Upper lobe of right lung (tissue), 1 donor: ENCODE measurements at regions of chr2 and their contacts with region 1.

Region 1: DNA sequence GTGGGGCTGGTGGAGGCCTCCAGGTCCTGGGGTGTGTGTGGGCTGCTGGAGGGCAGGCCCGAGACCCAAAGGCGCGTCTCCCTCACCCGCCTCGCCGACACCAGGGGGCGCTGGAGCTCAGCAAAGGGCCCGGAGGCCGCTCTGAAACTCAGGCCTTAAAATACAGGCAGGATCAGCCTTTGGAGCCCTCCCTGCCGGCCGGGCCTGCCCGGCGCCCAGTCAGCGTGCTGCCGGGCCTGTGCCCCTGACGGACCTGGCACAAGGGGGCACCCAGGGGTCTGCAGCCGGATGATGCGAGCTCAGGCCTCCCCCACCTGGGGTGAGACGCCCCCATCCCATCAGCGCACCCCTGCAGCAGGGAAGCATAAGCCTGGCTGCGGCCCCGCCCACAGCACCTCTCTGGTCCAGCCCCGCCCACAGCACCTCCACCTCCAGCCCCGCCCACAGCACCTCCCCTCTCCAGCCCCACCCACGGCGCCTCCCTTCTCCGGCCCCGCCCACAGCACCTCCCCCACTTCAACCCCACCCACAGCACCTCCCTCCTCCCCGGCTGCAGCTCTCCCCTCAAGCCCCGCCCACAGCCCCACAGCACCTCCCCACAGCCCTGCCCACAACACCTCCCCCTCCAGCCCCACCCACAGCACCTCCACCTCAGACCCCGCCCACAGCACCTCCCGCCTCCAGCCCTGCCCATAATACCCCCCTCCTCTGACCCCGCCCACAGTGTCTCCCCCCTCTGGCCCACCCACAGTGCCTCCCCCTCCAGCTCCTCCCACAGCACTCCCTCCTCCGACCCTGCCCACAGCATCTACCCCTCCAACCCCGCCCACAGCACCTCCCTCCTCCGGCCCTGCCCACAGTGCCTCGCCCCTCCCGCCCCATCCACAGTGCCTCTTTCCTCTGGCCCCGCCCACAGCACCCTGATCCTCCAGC is 92.8 kb upstream of the OTOS start:
- DNase-seq: peak; percentile 95
- ATAC-seq: peak; percentile 90
- H3K4me3 ChIP-seq: peak overlapping the region; percentile 35
- H3K27ac ChIP-seq: no peak overlapping the region
- H3K4me1 ChIP-seq: peaks cover 11% of the 10 kb centered on the region
- H3K27me3 ChIP-seq: no peaks in the 10 kb centered on the region
- CTCF ChIP-seq: peak; percentile 82

Region 2: GRCh38 chr2:239944694-239945551 is 288.3 kb before region 1 on chr2:
- intact Hi-C with region 1: no loop called
- DNase-seq: peak; percentile 69
- ATAC-seq: peak; percentile 52
- H3K4me3 ChIP-seq: no peak overlapping the region
- H3K27ac ChIP-seq: no peak overlapping the region
- H3K4me1 ChIP-seq: no peaks in the 10 kb centered on the region
- H3K27me3 ChIP-seq: no peaks in the 10 kb centered on the region
- CTCF ChIP-seq: no peak

Region 3: DNA sequence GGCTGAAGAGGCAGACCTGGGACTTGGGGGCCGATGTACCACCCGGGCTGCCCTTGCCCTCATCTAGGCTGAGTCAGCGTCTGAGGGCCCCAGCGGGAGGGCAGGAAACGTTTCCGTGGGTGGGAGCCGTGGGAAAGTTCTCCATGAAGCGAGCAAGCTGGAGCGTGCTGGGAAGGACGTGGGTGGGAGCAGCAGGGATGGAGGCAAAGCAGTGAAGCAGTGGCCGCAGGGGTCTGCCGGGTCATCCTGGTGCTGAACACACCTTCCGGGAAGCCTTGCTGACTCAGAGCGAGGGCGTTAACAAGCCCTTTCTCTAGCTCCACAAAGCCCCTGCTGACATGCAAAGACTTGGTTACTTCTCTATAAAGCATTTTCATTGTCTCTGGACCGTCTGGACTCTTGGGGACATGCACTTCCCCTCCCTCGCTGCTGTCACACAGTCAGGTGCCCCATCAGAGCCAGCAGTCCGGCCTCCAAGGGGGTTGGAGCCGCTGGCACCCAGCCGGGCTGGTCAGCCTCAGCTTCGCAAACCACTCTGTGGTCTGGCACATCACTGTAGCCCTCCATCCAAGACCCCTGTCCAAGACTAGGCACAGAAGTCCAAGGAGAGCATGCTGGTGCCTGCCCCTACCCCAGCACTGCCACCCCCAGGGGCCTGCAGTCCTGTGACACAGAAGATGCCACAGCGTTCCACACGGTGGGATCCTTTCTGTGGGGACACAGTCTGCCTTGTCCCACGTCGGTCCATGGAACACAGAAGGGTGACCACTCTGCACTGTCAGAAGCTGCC is 87.2 kb after region 1 on chr2:
- intact Hi-C with region 1: no loop called
- DNase-seq: no peak
- ATAC-seq: no peak
- H3K4me3 ChIP-seq: no peak overlapping the region
- H3K27ac ChIP-seq: no peak overlapping the region
- H3K4me1 ChIP-seq: no peaks in the 10 kb centered on the region
- H3K27me3 ChIP-seq: no peaks in the 10 kb centered on the region
- CTCF ChIP-seq: no peak

Region 4: GRCh38 chr2:240355001-240355976 is 122.1 kb after region 1 on chr2:
- intact Hi-C with region 1: no loop called
- DNase-seq: no peak
- ATAC-seq: no peak
- H3K4me3 ChIP-seq: no peak overlapping the region
- H3K27ac ChIP-seq: no peak overlapping the region
- H3K4me1 ChIP-seq: no peaks in the 10 kb centered on the region
- H3K27me3 ChIP-seq: no peaks in the 10 kb centered on the region
- CTCF ChIP-seq: no peak

Region 5: GRCh38 chr2:240439698-240440151 is 206.5 kb after region 1 on chr2:
- intact Hi-C with region 1: loop called (anchors 5 kb)
- DNase-seq: peak; percentile 59
- ATAC-seq: no peak
- H3K4me3 ChIP-seq: no peak overlapping the region
- H3K27ac ChIP-seq: no peak overlapping the region
- H3K4me1 ChIP-seq: peaks cover 20% of the 10 kb centered on the region
- H3K27me3 ChIP-seq: peaks cover 22% of the 10 kb centered on the region
- CTCF ChIP-seq: no peak